Activated T-helper 2 cell treated with anti-CD3 and anti-CD28 coated beads, Interferon-gamma antibody, Interleukin-2, Interleukin-4, amounts not matched to agents 10 μg/mL and 5 μg/mL and 100 μg/mL, durations not matched to agents 14 hours and 24 hours and 36 hours (primary cell): ENCODE measurements at regions of chr2 and their contacts with region 1.

Region 1: GRCh38 chr2:187499941-187500532 is 52.0 kb upstream of the CALCRL start:
- DNase-seq: no peak
- H3K4me3 Mint-ChIP-seq: no peak overlapping the region
- H3K27ac Mint-ChIP-seq: no peak overlapping the region
- H3K4me1 Mint-ChIP-seq: peaks cover 4% of the 10 kb centered on the region
- H3K27me3 Mint-ChIP-seq: peaks cover 5% of the 10 kb centered on the region

Region 2: GRCh38 chr2:187567126-187567525 is 67.1 kb after region 1 on chr2:
- intact Hi-C with region 1: no loop called
- DNase-seq: no peak
- H3K4me3 Mint-ChIP-seq: no peak overlapping the region
- H3K27ac Mint-ChIP-seq: no peak overlapping the region
- H3K4me1 Mint-ChIP-seq: no peaks in the 10 kb centered on the region
- H3K27me3 Mint-ChIP-seq: peaks cover 8% of the 10 kb centered on the region

Region 3: GRCh38 chr2:187581125-187581896 is 81.3 kb after region 1 on chr2:
- intact Hi-C with region 1: loop called (anchors 1 kb)
- DNase-seq: no peak
- H3K4me3 Mint-ChIP-seq: no peak overlapping the region
- H3K27ac Mint-ChIP-seq: no peak overlapping the region
- H3K4me1 Mint-ChIP-seq: peaks cover 12% of the 10 kb centered on the region
- H3K27me3 Mint-ChIP-seq: no peaks in the 10 kb centered on the region

Region 4: GRCh38 chr2:187842978-187843847 is 343.2 kb after region 1 on chr2:
- intact Hi-C with region 1: loop called (anchors 1 kb)
- DNase-seq: no peak
- H3K4me3 Mint-ChIP-seq: no peak overlapping the region
- H3K27ac Mint-ChIP-seq: no peak overlapping the region
- H3K4me1 Mint-ChIP-seq: no peaks in the 10 kb centered on the region
- H3K27me3 Mint-ChIP-seq: no peaks in the 10 kb centered on the region

Region 5: DNA sequence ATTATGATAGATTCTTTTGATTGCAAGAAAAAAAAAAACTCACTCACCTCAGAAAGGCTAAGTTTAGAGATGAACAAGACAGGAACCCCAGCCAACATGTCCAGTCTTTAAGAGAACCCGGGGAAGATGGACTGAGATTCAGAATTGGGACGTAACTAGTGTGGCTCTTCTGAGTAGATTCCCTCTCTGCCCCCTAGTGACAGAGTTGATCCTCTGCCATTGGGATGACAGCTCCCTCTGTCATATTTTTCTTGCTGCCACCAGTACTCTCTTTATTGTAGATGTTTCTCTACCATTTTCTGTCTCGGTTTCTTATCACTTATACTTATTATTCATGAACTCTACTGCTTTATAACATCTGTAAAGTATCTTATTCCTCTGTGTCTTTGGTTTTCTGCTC is 869.3 kb after region 1 on chr2:
- intact Hi-C with region 1: loop called (anchors 10 kb)
- DNase-seq: no peak
- H3K4me3 Mint-ChIP-seq: no peak overlapping the region
- H3K27ac Mint-ChIP-seq: no peak overlapping the region
- H3K4me1 Mint-ChIP-seq: no peaks in the 10 kb centered on the region
- H3K27me3 Mint-ChIP-seq: no peaks in the 10 kb centered on the region

Region 6: DNA sequence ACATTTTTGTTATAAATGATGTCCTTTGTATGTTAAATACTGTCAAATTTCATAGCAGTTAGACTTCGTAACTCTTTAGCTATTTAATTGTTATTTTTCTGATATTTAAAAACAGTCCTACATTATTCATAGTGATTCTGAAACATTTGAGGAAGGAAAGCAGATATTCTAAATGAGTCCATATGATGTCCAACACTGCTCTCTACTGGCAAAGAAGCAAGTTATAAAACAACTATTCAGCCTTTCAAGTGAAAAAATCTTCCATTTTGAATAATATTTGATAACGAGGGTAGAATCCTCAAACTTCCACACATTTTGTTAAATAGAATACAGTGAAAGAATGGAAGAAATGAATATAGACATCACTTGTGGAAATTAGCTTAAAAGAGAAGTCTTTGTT is 1012.4 kb after region 1 on chr2:
- intact Hi-C with region 1: loop called (anchors 5 kb)
- DNase-seq: no peak
- H3K4me3 Mint-ChIP-seq: no peak overlapping the region
- H3K27ac Mint-ChIP-seq: no peak overlapping the region
- H3K4me1 Mint-ChIP-seq: no peaks in the 10 kb centered on the region
- H3K27me3 Mint-ChIP-seq: no peaks in the 10 kb centered on the region